Dendritic cell treated with granulocyte-macrophage colony-stimulating factor and Interleukin-4, amounts not matched to agents 40 ng/mL and 50 ng/mL, for 4 days (primary cell): ENCODE measurements at regions of chr17 and their contacts with region 1.

Region 1: DNA sequence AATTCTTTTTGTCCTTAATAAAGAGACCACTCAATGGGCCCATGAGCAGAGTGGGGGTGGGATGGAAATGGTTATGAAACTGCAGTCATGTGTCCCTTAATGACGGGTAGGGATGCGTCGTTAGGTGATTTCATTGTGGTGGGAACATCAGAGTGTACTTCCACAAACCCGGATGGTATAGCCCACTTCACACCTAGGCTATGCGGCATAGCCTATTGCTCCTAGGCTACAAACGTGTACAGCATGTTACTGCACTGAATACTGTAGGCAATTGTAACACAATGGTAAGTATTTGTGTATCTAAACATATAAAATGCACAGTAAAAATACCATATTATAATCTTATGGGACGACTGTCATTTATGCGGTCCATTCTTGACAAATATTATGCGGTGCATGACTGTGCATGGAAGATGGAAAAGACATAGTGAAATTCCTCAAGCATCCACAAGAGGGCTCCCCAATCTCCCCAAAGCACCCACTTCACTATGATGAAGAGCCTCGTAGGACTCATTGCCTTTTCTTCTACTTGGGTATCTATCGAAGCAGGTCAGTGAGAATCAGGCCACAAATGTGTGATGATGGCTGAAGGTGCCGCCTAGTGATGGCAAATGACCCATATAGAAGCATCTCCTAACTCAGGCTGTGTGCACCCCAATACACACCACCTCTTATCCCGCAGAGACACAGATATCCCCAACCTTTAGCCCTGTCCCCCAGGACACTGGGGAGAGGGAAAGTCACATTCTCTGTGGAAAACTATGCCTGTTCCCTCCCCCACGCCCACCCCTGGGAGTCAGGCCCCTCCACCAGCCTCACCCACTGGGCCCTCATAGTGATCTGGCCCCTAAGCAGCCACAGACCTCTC is 43.5 kb downstream of the TBX21 start:
- H3K4me3 Mint-ChIP-seq: no peak overlapping the region
- H3K27ac Mint-ChIP-seq: no peak overlapping the region
- H3K4me1 Mint-ChIP-seq: peaks cover 32% of the 10 kb centered on the region
- H3K27me3 Mint-ChIP-seq: peaks cover 71% of the 10 kb centered on the region

Region 2: GRCh38 chr17:47889734-47890529 is 113.4 kb after region 1 on chr17:
- intact Hi-C with region 1: loop called (anchors 2 kb)
- H3K4me3 Mint-ChIP-seq: no peak overlapping the region
- H3K27ac Mint-ChIP-seq: no peak overlapping the region
- H3K4me1 Mint-ChIP-seq: peaks cover 33% of the 10 kb centered on the region
- H3K27me3 Mint-ChIP-seq: peaks cover 2% of the 10 kb centered on the region

Region 3: DNA sequence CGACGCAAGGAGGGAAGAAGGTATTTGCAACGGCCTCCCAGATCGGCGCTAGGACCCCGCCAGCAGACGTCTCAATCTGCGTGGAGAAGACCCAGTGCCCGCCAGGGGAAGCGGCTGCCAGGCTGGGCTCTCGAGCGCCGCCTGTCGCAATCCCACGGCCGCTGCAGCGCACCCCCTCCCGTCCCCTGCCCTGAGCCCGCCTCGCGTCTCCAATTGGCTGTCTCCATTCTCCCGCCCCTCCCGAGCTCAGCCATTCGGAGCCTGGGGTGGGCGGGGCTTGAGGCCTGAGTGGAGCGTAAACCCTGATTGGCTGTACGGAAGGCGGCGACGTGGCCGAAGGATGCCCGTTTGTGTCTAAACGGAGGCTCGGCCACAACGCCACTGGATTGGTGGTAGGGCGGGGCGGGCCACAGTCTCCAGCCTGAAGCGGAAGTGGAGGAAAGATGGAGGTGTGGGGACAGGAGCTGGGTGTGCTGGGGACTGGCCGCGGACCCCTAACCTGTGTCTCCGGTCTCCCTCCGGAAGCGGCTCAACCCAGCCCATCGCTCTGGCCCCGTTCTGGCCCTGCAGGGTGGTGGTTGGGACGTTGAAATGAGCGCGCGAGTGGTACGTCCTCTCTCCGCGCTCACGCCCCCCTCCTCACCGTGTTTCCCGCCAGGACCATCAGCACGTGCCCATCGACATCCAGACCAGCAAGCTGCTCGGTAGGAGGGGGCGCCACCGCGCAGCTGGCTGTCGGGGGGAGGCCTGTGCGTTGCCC is 194.3 kb after region 1 on chr17 and contains the start of gene CDK5RAP3:
- intact Hi-C with region 1: no loop called
- H3K4me3 Mint-ChIP-seq: peak within 1 kb of the TSS; percentile 93
- H3K27ac Mint-ChIP-seq: peak within 1 kb of the TSS; percentile 90
- H3K4me1 Mint-ChIP-seq: peaks cover 27% of the 10 kb centered on the region
- H3K27me3 Mint-ChIP-seq: no peaks in the 10 kb centered on the region